GM10248 (cell line): ENCODE measurements at regions of chr11 and their contacts with region 1.

Region 1: GRCh38 chr11:64916775-64917662 is at the start of gene ATG2A:
- DNase-seq: peak; percentile 99
- CTCF ChIP-seq: no peak

Region 2: GRCh38 chr11:64894070-64894796 is 22.8 kb before region 1 on chr11:
- CTCF ChIA-PET with region 1: interaction called, 28 read pairs
- POLR2A ChIA-PET with region 1: interaction called, 5 read pairs
- DNase-seq: peak; percentile 91
- CTCF ChIP-seq: peak; percentile 97